ENCODE measurements at regions of chr9 and their contacts with region 1.

Region 1: GRCh38 chr9:137034863-137035761 is 3.2 kb upstream of the FUT7 start:
- DNase-seq: peak; percentile 92
- ATAC-seq: peak; percentile 92
- H3K4me3 Mint-ChIP-seq: peak overlapping the region; percentile 69
- H3K27ac Mint-ChIP-seq: peak overlapping the region; percentile 89
- H3K4me1 Mint-ChIP-seq: peaks cover 48% of the 10 kb centered on the region
- H3K27me3 Mint-ChIP-seq: no peaks in the 10 kb centered on the region

Region 2: DNA sequence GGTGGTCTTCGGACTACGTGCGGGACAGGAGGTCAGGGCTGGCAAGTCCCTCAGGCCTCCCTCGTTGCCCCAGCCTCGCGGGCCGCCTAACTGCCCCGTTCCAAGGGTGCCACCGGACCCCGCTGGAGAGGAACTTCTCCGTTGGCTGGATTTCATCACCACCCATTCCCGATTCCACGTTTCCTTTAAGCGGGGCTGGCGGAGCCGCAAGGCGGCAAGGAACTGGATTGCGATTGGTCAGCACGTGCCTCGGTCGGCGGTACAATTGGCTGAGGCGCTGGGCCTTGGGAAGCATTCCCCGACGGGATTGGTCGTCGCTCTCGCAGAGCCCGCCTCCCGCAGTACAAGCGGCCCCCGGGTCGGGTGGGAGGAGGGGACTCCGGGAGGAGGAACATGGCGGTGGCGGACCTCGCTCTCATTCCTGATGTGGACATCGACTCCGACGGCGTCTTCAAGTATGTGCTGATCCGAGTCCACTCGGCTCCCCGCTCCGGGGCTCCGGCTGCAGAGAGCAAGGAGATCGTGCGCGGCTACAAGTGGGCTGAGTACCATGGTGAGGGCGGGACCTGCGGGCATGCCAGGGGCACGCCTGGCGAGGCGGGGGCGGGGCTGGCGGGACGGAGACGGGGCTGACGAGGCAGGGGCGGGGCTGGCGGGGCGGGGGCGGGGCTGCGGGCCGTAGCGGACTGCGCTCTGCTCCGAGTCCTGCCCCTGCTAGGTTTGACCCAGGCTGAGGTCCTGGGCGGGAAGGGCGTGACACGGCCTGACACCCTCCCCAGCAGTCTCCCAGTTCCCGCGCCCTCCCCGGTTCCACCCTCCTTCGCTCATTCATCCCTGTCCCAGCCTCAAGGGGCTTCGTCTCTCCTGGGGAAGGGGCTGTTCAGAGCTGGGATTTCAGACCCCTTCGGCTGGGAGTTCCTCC is 185.8 kb before region 1 on chr9 and contains the start of gene PHPT1:
- CTCF ChIA-PET with region 1: interaction called, 37 read pairs
- POLR2A ChIA-PET with region 1: no interaction called
- DNase-seq: peak; percentile 98
- ATAC-seq: peak; percentile 93
- H3K4me3 Mint-ChIP-seq: peak within 1 kb of the TSS; percentile 92
- H3K27ac Mint-ChIP-seq: peak within 1 kb of the TSS; percentile 91
- H3K4me1 Mint-ChIP-seq: peaks cover 21% of the 10 kb centered on the region
- H3K27me3 Mint-ChIP-seq: peaks cover 13% of the 10 kb centered on the region
- total RNA-seq, gene PHPT1: 108 to 119 TPM

Region 3: DNA sequence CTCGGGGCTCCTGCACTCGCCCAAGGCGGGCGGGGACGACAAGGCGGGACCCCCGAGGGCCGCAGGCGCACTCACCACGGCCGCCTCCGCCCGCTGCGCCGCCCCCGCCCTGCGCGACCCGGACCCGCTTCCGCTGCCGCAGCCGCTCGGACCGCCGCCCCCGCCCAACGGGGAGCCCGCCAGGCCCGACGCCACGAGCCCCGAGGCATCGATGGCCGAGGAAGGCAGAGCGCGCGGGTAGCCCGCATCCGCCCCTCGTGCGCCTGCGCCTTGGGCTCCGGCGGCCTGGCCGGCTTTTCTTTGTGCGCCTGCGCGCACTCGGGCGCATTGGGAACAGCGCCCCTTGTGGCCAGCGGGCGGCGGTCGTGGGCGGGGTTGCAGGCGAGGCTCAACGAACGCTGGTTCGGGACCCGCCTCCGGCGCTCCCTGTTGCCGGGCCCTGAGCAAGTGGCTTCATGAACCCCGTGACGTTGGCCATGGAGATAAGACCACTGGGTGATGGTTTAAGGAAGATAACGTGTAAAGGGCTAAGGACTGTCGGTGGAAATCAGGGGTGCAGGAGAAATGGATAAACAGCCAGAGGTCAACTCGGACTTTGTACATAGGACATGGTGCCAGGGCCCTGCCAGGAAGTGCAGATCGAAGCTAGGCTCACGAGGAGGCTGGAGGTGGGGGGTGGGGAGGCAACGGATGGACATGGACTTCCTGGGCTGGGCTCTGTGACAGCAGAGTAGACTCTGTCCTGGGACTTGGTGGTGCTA is 90.4 kb before region 1 on chr9 and contains the starts of genes C8G and FBXW5:
- CTCF ChIA-PET with region 1: interaction called, 146 read pairs
- POLR2A ChIA-PET with region 1: interaction called, 11 read pairs
- DNase-seq: peak; percentile 95
- ATAC-seq: peak; percentile 77
- H3K4me3 Mint-ChIP-seq: peak within 1 kb of the TSS; percentile 79
- H3K27ac Mint-ChIP-seq: peak within 1 kb of the TSS; percentile 91
- H3K4me1 Mint-ChIP-seq: peaks cover 21% of the 10 kb centered on the region
- H3K27me3 Mint-ChIP-seq: no peaks in the 10 kb centered on the region
- total RNA-seq, gene C8G: 1.4 to 1.5 TPM
- total RNA-seq, gene FBXW5: 103 to 104 TPM

Region 4: DNA sequence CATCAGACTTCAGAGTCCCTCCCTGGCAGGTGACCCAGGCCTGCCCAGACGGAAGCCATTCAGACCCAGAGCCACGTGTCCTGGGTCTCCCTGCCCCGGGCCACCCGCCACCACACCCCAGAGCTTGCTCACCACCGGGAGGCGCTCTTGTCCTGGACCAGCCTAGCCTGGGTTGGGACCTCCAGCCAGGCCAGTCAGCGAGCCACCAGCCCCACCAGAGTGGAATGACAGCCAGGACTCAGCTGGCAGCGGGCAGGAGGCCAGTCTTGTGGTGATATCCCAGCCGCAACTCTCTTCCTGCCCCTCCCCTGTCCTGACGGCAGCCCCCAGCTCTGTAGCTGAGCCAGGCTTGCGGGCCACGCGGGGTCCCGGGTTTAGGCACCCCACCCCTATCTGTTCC is 59.5 kb before region 1 on chr9:
- CTCF ChIA-PET with region 1: interaction called, 25 read pairs
- POLR2A ChIA-PET with region 1: no interaction called
- DNase-seq: peak; percentile 47
- ATAC-seq: no peak
- H3K4me3 Mint-ChIP-seq: peak overlapping the region; percentile 38
- H3K27ac Mint-ChIP-seq: peak overlapping the region; percentile 60
- H3K4me1 Mint-ChIP-seq: peaks cover 25% of the 10 kb centered on the region
- H3K27me3 Mint-ChIP-seq: no peaks in the 10 kb centered on the region

Region 5: GRCh38 chr9:137000177-137000883 is 34.8 kb before region 1 on chr9:
- CTCF ChIA-PET with region 1: interaction called, 43 read pairs
- POLR2A ChIA-PET with region 1: interaction called, 3 read pairs
- DNase-seq: peak; percentile 70
- ATAC-seq: peak; percentile 54
- H3K4me3 Mint-ChIP-seq: peak overlapping the region; percentile 55
- H3K27ac Mint-ChIP-seq: peak overlapping the region; percentile 86
- H3K4me1 Mint-ChIP-seq: peaks cover 60% of the 10 kb centered on the region
- H3K27me3 Mint-ChIP-seq: no peaks in the 10 kb centered on the region

Region 6: GRCh38 chr9:137046098-137046787 is 11.1 kb after region 1 on chr9 and contains the start of gene NPDC1:
- CTCF ChIA-PET with region 1: interaction called, 42 read pairs
- POLR2A ChIA-PET with region 1: interaction called, 3 read pairs
- DNase-seq: peak; percentile 89
- ATAC-seq: peak; percentile 82
- H3K4me3 Mint-ChIP-seq: peak within 1 kb of the TSS; percentile 71
- H3K27ac Mint-ChIP-seq: no peak within 1 kb of the TSS
- H3K4me1 Mint-ChIP-seq: peaks cover 15% of the 10 kb centered on the region
- H3K27me3 Mint-ChIP-seq: peaks cover 28% of the 10 kb centered on the region
- total RNA-seq, gene NPDC1: 20.1 to 29.9 TPM

Region 7: GRCh38 chr9:137070201-137070905 is 35.2 kb after region 1 on chr9 and contains the start of gene SAPCD2:
- CTCF ChIA-PET with region 1: interaction called, 32 read pairs
- POLR2A ChIA-PET with region 1: interaction called, 4 read pairs
- DNase-seq: peak; percentile 92
- ATAC-seq: peak; percentile 90
- H3K4me3 Mint-ChIP-seq: peak within 1 kb of the TSS; percentile 86
- H3K27ac Mint-ChIP-seq: peak within 1 kb of the TSS; percentile 91
- H3K4me1 Mint-ChIP-seq: peaks cover 28% of the 10 kb centered on the region
- H3K27me3 Mint-ChIP-seq: no peaks in the 10 kb centered on the region
- total RNA-seq, gene SAPCD2: 56.8 to 57.0 TPM

Region 8: DNA sequence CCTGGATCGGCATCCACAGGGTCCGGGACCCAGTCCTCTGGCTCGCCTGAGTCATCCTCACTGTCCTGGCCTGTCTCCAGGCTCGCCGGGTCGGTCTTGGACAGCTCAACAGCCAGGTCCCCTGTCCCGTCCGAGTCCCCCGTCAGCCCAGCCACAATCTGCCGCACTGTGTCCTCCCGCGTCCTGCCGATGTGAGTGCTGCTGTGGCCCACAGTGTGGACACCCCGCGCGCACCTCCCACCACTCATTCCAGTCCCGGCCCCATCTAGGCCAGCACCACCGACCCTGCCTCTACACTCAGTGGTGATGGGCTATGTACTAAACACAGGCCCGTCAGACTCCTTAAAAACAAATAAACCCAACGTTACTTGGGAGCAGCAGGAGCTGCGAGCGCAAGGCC is 146.6 kb after region 1 on chr9:
- CTCF ChIA-PET with region 1: no interaction called
- POLR2A ChIA-PET with region 1: no interaction called
- DNase-seq: no peak
- ATAC-seq: no peak
- H3K4me3 Mint-ChIP-seq: no peak overlapping the region
- H3K27ac Mint-ChIP-seq: no peak overlapping the region
- H3K4me1 Mint-ChIP-seq: peaks cover 11% of the 10 kb centered on the region
- H3K27me3 Mint-ChIP-seq: no peaks in the 10 kb centered on the region

Region 9: GRCh38 chr9:137223078-137223970 is 188.2 kb after region 1 on chr9:
- CTCF ChIA-PET with region 1: no interaction called
- POLR2A ChIA-PET with region 1: no interaction called
- DNase-seq: peak; percentile 98
- ATAC-seq: peak; percentile 90
- H3K4me3 Mint-ChIP-seq: peak overlapping the region; percentile 80
- H3K27ac Mint-ChIP-seq: peak overlapping the region; percentile 87
- H3K4me1 Mint-ChIP-seq: peaks cover 19% of the 10 kb centered on the region
- H3K27me3 Mint-ChIP-seq: no peaks in the 10 kb centered on the region